PC-3 (cell line): ENCODE measurements at regions of chr4 and their contacts with region 1.

Region 1: GRCh38 chr4:137664046-137664387 is 131.7 kb upstream of the PCDH18 start:
- DNase-seq: peak; percentile 49
- ATAC-seq: peak; percentile 88
- H3K4me3 ChIP-seq: no peak overlapping the region
- H3K27ac ChIP-seq: peak overlapping the region; percentile 19
- H3K4me1 ChIP-seq: peaks cover 18% of the 10 kb centered on the region
- H3K27me3 ChIP-seq: no peaks in the 10 kb centered on the region
- CTCF ChIP-seq: no peak

Region 2: DNA sequence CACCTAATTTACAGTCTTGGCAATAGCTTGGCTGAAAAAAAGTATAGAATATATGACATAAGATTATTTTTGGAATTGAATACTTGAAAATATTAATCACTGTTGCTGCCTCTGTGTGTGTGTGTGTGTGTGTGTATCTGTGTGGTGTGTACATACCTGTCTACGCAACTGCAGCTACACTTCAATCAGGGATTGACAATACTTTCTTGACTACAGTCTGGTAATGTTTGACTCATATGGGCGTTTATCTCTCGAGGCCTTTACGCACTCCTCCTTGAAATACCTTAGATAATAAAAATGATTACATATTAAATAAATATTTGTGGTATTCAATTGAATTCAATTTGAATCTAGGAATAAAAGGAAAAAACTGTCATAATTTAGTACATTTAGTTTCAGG is 696.9 kb before region 1 on chr4:
- CTCF ChIA-PET with region 1: no interaction called
- POLR2A ChIA-PET with region 1: interaction called, 16 read pairs
- intact Hi-C with region 1: no loop called
- DNase-seq: peak; percentile 74
- ATAC-seq: peak; percentile 97
- H3K4me3 ChIP-seq: no peak overlapping the region
- H3K27ac ChIP-seq: peak overlapping the region; percentile 32; the same call in 1 of the 2 replicates
- H3K4me1 ChIP-seq: no peaks in the 10 kb centered on the region; the same call in 1 of the 2 replicates
- H3K27me3 ChIP-seq: no peaks in the 10 kb centered on the region
- CTCF ChIP-seq: no peak

Region 3: GRCh38 chr4:137124278-137124932 is 539.6 kb before region 1 on chr4:
- CTCF ChIA-PET with region 1: interaction called, 3 read pairs
- POLR2A ChIA-PET with region 1: no interaction called
- intact Hi-C with region 1: loop called (anchors 5 kb)
- DNase-seq: peak; percentile 68
- ATAC-seq: peak; percentile 99
- H3K4me3 ChIP-seq: peak overlapping the region; percentile 85
- H3K27ac ChIP-seq: peak overlapping the region; percentile 17; the same call in 1 of the 2 replicates
- H3K4me1 ChIP-seq: peaks cover 8% of the 10 kb centered on the region; the same call in 1 of the 2 replicates
- H3K27me3 ChIP-seq: no peaks in the 10 kb centered on the region
- CTCF ChIP-seq: peak; percentile 68

Region 4: DNA sequence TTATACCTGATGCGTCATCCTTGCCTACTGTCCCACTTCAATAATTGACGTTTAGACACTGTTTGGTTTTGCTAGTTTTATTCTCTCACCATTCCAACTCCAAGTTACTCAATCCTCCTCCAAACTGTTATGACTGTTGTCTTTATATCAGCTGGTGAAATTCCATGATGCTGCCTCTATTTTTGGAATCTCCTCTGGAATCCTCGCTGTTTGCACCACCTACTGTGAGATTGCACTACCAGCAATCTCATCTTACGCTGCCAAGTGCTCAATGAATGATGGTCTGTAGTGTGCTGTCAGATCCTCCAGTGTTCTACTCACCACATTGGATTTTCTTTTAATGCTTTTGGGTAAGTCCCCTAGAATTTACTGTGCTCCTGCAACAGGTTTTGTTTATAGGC is 118.6 kb before region 1 on chr4:
- CTCF ChIA-PET with region 1: no interaction called
- POLR2A ChIA-PET with region 1: no interaction called
- intact Hi-C with region 1: no loop called
- DNase-seq: no peak
- ATAC-seq: no peak
- H3K4me3 ChIP-seq: no peak overlapping the region
- H3K27ac ChIP-seq: no peak overlapping the region
- H3K4me1 ChIP-seq: no peaks in the 10 kb centered on the region; the same call in 1 of the 2 replicates
- H3K27me3 ChIP-seq: no peaks in the 10 kb centered on the region
- CTCF ChIP-seq: no peak

Region 5: GRCh38 chr4:137647375-137647774 is 16.6 kb before region 1 on chr4:
- CTCF ChIA-PET with region 1: no interaction called
- POLR2A ChIA-PET with region 1: no interaction called
- intact Hi-C with region 1: loop called (anchors 1 kb)
- DNase-seq: peak; percentile 9
- ATAC-seq: no peak
- H3K4me3 ChIP-seq: no peak overlapping the region
- H3K27ac ChIP-seq: peak overlapping the region; percentile 82
- H3K4me1 ChIP-seq: peaks cover 50% of the 10 kb centered on the region
- H3K27me3 ChIP-seq: no peaks in the 10 kb centered on the region
- CTCF ChIP-seq: no peak

Region 6: DNA sequence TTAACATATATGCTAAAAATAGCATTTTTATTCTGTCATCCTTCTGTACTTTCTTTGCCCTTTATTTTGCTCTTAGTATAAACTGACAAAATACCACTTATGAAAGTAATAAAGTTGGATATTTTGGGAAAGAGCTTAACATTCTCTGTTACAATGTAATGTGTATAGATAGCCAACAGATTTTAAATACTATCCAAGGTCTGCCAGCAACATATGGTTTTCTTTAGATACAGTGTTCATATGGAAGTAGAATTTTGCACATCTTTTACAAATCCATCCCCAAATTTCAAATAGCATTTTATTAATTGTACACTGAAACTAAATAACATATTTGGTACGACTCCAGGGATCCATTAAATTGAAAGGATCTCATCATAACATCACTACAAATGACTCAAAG is 136.8 kb after region 1 on chr4:
- CTCF ChIA-PET with region 1: no interaction called
- POLR2A ChIA-PET with region 1: no interaction called
- intact Hi-C with region 1: loop called (anchors 10 kb)
- DNase-seq: no peak
- ATAC-seq: no peak
- H3K4me3 ChIP-seq: no peak overlapping the region
- H3K27ac ChIP-seq: no peak overlapping the region
- H3K4me1 ChIP-seq: peaks cover 22% of the 10 kb centered on the region
- H3K27me3 ChIP-seq: no peaks in the 10 kb centered on the region
- CTCF ChIP-seq: no peak